ENCODE measurements at regions of chr2 and their contacts with region 1.

Region 1: DNA sequence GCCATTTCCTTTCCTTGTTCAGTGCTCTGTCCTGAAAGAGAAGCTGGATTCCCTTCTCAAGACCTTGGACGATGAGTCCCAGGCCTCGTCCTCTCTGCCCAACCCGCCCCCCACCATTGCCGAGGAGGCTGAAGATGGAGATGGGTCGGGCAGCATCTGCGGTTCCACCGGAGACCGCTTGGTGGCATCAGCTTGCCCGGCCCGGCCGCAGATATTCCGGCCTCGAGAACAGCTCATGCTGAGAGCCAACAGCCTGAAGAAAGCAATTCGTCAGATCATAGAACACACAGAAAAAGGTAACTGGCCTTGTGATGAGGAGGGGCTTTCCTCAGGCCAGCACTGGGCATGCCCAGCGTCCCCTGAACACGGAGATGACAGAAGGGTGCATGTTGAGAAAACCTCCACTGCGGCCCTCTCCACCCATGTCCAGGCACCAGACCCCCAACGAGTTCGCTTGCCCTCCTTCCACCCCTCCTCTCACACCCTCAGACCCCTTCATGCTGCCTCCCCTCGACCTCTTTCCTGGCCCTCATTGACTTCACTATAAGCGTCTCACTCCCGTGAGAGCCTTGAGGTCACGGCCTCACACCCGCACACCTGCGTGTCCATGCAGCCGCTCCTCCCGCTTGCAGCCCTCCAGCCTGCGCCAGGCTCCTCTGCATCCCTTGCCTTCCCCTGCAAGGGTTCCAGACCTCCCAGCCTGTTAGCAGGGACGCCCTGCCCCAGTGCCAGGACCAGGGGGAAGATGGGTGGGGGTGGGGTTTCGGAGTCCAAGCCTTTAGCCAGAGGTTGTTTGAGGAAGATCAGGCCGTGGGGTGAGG is 95.0 kb downstream of the DGKD start:
- DNase-seq: peak; percentile 56
- H3K4me3 ChIP-seq: no peak overlapping the region; a peak in 1 of 4 replicates
- H3K27ac ChIP-seq: no peak overlapping the region
- H3K4me1 ChIP-seq: no peaks in the 10 kb centered on the region
- H3K27me3 ChIP-seq: no peaks in the 10 kb centered on the region
- CTCF ChIP-seq: peak; percentile 25
- EP300 ChIP-seq: no peak
- RAD21 ChIP-seq: peak; percentile 35

Region 2: GRCh38 chr2:233319256-233319655 is 130.0 kb before region 1 on chr2:
- CTCF ChIA-PET with region 1: no interaction called
- POLR2A ChIA-PET with region 1: no interaction called
- DNase-seq: no peak
- H3K4me3 ChIP-seq: no peak overlapping the region
- H3K27ac ChIP-seq: no peak overlapping the region
- H3K4me1 ChIP-seq: peaks cover 0 to 5% of the 10 kb centered on the region in 2 experiments; a peak in 1 of 4 replicates
- H3K27me3 ChIP-seq: no peaks in the 10 kb centered on the region
- CTCF ChIP-seq: no peak
- EP300 ChIP-seq: no peak
- RAD21 ChIP-seq: no peak

Region 3: DNA sequence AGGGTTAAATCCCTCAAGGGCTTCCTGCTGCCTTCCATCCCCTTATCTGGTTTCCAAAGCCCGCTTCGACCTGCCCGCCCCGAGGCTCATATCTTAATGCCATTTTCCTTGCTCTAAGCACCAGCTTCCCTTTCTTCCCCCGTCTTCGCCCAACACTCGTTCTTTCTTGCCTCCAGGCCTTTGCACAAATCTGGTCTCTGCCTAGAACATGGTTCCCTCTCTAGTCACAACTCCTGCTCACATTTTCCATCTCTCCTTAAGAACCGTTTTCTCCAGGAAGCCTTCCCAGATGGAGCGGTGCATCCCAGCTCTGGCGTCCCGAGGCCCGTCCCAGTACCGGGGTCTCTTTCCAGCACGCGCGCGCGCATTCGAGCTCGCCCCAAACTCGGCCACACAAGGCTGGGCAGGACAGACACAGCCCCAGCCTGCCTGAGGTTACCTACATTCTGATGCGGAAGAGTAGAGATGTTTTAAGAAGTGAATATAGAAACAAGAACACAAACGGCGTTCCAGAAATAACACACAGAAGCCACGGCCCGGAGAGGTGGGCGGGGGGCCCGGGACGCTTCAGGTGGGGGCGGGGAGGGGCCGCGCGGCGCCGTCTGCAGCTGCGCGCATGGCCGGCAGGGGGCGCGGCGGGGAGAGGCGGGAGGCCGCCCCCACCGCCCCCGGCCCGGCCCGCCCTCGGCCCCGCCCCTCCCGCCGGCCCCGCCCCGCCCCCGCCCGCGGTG is 95.4 kb before region 1 on chr2 and contains the start of gene DGKD:
- CTCF ChIA-PET with region 1: interaction called, 14 read pairs
- POLR2A ChIA-PET with region 1: no interaction called
- DNase-seq: peak; percentile 99
- H3K4me3 ChIP-seq: peak within 1 kb of the TSS; percentile 82 to 84
- H3K27ac ChIP-seq: peak within 1 kb of the TSS; percentile 56 to 73; a peak in 3 of 4 replicates
- H3K4me1 ChIP-seq: peaks cover 29 to 33% of the 10 kb centered on the region in 2 experiments; a peak in 3 of 4 replicates
- H3K27me3 ChIP-seq: no peaks in the 10 kb centered on the region
- CTCF ChIP-seq: peak; percentile 41
- EP300 ChIP-seq: no peak
- RAD21 ChIP-seq: no peak
- polyA plus RNA-seq, gene DGKD: 17.7 and 21.7 TPM in 2 replicates

Region 4: DNA sequence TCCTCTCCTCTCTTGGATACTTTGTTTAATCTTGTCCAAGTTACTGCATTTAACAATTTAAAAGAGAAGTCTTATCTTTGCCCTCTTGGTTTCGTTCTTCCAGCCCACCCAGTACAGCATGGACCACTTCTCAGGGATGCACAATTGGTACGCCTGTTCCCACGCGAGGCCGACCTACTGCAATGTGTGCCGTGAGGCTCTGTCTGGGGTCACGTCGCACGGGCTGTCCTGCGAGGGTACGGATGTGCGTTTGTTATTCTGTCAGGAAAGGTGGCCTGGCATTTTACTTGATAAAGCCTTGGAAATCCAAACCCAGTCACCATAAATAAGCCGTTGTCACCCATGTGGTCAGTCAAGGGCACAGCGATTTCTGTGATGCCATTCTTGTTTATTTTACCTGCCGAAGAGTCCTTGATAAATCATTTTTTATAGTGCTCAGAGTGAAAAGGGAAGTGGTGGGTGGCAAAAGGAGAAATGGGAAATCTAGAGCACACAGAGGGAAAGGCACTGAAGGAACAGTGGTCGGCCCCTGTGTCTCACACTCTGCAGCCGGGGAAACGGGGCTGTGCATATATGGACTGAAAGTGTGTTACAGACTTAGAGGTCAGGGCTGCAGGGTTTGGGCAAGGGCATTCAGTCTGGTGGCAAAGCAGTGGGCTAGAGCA is 14.5 kb before region 1 on chr2:
- CTCF ChIA-PET with region 1: interaction called, 29 read pairs
- POLR2A ChIA-PET with region 1: no interaction called
- DNase-seq: no peak
- H3K4me3 ChIP-seq: no peak overlapping the region
- H3K27ac ChIP-seq: no peak overlapping the region
- H3K4me1 ChIP-seq: peaks cover 0 to 13% of the 10 kb centered on the region in 2 experiments; a peak in 2 of 4 replicates
- H3K27me3 ChIP-seq: no peaks in the 10 kb centered on the region
- CTCF ChIP-seq: no peak
- EP300 ChIP-seq: no peak
- RAD21 ChIP-seq: no peak

Region 5: GRCh38 chr2:233501198-233502076 is 52.1 kb after region 1 on chr2:
- CTCF ChIA-PET with region 1: no interaction called
- POLR2A ChIA-PET with region 1: no interaction called
- DNase-seq: no peak
- H3K4me3 ChIP-seq: no peak overlapping the region
- H3K27ac ChIP-seq: peak overlapping the region in 1 of 2 experiments; percentile 17; a peak in 1 of 4 replicates
- H3K4me1 ChIP-seq: no peaks in the 10 kb centered on the region
- H3K27me3 ChIP-seq: no peaks in the 10 kb centered on the region
- CTCF ChIP-seq: no peak
- EP300 ChIP-seq: no peak
- RAD21 ChIP-seq: no peak

Region 6: DNA sequence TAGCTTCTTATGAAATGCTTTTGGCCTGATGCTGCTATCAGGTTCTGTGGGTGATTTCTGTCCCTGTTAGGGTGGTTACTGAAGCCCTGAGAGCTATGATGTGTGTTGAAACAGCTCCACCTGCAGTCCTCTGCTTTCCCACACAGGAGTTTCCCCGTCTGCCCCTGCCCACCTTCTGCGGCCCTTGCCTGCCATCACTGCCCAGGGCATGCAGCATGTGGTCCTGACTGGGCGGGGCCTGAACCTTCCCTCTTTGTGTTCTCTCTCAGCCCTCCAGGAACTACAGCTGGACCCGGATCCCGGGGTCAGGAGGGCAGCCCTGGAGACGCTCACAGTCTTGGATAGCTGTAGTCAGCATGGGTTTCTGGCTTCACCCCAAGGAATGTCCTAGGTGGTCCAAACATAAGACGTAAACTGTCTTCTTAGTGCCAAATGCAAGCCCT is 383.6 kb after region 1 on chr2:
- CTCF ChIA-PET with region 1: interaction called, 19 read pairs
- POLR2A ChIA-PET with region 1: no interaction called
- DNase-seq: peak; percentile 67
- H3K4me3 ChIP-seq: no peak overlapping the region
- H3K27ac ChIP-seq: peak overlapping the region in 1 of 2 experiments; percentile 45; a peak in 2 of 4 replicates
- H3K4me1 ChIP-seq: peaks cover 0 to 8% of the 10 kb centered on the region in 2 experiments; a peak in 1 of 4 replicates
- H3K27me3 ChIP-seq: no peaks in the 10 kb centered on the region
- CTCF ChIP-seq: peak; percentile 40
- EP300 ChIP-seq: no peak
- RAD21 ChIP-seq: peak; percentile 73

Measured in SK-N-SH (cell line).